Esophagus muscularis mucosa (tissue), 4 donors: ENCODE measurements at regions of chr17 and their contacts with region 1.

Region 1: DNA sequence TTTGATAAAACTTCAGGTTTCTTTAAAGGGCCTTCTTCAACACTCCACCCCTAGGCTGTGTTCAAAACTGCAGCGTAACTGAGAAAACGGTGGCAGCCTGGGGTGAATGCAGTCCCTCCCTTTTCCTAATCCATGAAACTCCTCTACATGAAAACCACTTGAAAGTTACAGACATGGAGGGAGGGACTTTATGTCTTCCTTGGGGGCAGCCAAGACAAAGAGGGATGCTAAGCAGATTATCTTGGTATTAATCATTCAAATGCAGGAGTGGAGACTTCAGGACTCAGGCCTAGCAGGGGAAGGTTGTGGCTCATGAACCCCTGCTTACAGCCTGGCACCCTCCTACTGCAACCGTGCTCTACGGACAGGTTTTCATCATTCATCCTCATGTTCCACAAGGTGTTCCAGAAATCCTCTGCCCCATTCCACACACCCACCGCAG is 46.8 kb downstream of the RNF112 start:
- DNase-seq: no peak
- H3K4me3 ChIP-seq: no peak overlapping the region
- H3K27ac ChIP-seq: no peak overlapping the region
- H3K4me1 ChIP-seq: peaks cover 0 to 16% (median 14%) of the 10 kb centered on the region in 4 donors
- H3K27me3 ChIP-seq: no peaks in the 10 kb centered on the region
- CTCF ChIP-seq: no peak
- EP300 ChIP-seq: no peak
- POLR2A ChIP-seq: no peak

Region 2: GRCh38 chr17:19424934-19425868 is 32.6 kb before region 1 on chr17:
- intact Hi-C with region 1: no loop called
- DNase-seq: no peak
- H3K4me3 ChIP-seq: no peak overlapping the region
- H3K27ac ChIP-seq: peak overlapping the region; percentile 51 to 60 (median 56)
- H3K4me1 ChIP-seq: peaks cover 0 to 33% (median 23%) of the 10 kb centered on the region in 4 donors
- H3K27me3 ChIP-seq: no peaks in the 10 kb centered on the region
- CTCF ChIP-seq: no peak
- EP300 ChIP-seq: no peak
- POLR2A ChIP-seq: no peak

Region 3: GRCh38 chr17:19507775-19508576 is 50.1 kb after region 1 on chr17:
- intact Hi-C with region 1: loop called (anchors 10 kb)
- DNase-seq: peak; percentile 99
- H3K4me3 ChIP-seq: peak overlapping the region; percentile 75 to 84 (median 77)
- H3K27ac ChIP-seq: peak overlapping the region; percentile 94 to 99 (median 96)
- H3K4me1 ChIP-seq: peaks cover 6 to 17% (median 10%) of the 10 kb centered on the region in 4 donors
- H3K27me3 ChIP-seq: no peaks in the 10 kb centered on the region
- CTCF ChIP-seq: no peak
- EP300 ChIP-seq: no peak
- POLR2A ChIP-seq: peak; percentile 27

Region 4: DNA sequence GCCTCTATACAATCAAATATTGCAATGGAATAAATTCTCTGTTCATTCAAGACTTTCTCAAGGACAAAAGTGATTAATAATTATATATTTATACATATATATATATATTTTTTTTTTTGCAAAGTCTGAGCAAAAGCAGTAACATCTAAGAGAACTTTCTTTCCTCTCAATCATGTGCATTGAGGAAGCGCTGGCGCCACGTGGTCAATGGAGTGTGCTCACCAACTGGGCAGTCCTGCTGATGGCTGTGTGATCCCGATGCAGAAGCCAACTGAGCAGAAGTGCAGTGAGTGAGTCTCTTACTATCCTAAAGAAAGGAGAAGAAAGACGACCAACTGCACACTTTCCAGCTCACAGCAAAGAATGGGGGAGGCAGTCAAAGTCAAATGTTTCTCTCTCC is 447.1 kb after region 1 on chr17:
- intact Hi-C with region 1: no loop called
- DNase-seq: no peak
- H3K4me3 ChIP-seq: no peak overlapping the region
- H3K27ac ChIP-seq: no peak overlapping the region
- H3K4me1 ChIP-seq: peaks cover 0 to 18% (median 13%) of the 10 kb centered on the region in 4 donors
- H3K27me3 ChIP-seq: no peaks in the 10 kb centered on the region
- CTCF ChIP-seq: no peak
- EP300 ChIP-seq: no peak
- POLR2A ChIP-seq: no peak